ENCODE measurements at regions of chr2 and their contacts with region 1.

Region 1: DNA sequence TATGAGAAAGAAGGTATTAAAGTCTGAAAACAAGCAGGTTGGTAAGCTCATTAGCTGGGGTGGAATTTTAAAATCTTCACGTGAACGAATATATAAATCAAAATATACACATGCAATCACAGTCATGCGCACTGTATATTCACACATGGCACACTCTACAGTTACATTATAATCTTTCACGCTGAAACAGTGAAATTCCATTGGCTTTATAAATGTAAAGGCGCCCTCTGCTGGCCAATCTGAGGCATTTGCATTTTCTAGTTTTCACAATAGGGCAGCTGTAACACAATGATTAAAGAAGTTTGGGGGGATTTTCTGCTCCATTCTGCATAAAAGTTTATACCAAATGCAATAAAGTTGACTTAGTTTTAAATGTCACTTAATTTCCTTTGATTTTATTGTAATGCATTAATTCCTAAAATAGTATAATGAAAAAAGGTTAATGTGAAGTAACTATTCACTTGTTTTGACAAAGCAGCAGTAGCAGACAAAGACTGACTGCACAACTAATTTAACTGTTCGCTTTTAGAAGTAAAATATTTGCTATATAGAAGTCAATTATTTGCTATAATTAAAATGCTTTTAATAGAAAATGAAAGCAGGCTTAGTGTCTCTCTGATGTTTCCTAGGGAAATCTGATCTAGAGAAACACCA is 17.2 kb downstream of the IFIH1 start:
- DNase-seq: peak; percentile 63
- H3K4me3 ChIP-seq: no peak overlapping the region
- H3K27ac ChIP-seq: no peak overlapping the region
- H3K4me1 ChIP-seq: no peaks in the 10 kb centered on the region
- H3K27me3 ChIP-seq: no peaks in the 10 kb centered on the region
- CTCF ChIP-seq: peak; percentile 62 to 64
- POLR2A ChIP-seq: no peak

Region 2: DNA sequence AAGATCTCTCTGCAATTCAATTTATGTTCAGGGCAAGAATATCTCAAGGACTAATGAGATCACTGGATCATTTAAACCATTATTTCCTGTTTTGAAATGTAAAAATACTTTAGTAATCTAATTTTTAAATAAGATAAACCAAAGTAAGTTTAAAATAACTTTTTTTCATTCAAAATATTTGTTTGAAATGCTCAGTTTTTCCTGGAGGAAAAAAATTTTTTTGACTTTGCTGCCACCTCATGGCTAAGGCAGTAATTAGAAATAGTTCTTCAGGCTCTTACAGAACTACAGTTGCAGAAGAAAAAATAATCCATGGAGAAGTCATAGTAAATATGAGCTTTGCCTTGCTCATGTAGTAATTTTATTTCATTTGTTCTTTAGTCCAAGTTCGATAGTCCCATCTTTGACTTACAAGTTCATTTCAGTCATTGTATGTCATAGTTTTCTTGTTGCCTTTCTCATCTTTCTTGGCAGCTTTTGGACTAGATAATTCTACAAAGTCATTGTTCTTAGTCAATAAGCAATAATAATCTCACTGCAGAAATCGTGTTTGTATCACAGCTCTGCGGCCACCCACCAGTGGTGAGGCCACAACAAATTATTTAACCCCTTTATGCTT is 354.7 kb before region 1 on chr2:
- CTCF ChIA-PET with region 1: interaction called, 6 read pairs
- POLR2A ChIA-PET with region 1: no interaction called
- dilution Hi-C with region 1: no loop called
- intact Hi-C with region 1: loop called (anchors 5 kb)
- DNase-seq: peak; percentile 67
- H3K4me3 ChIP-seq: no peak overlapping the region
- H3K27ac ChIP-seq: no peak overlapping the region
- H3K4me1 ChIP-seq: no peaks in the 10 kb centered on the region
- H3K27me3 ChIP-seq: peaks cover 0 to 3% of the 10 kb centered on the region in 2 experiments
- CTCF ChIP-seq: peak; percentile 32 to 39
- POLR2A ChIP-seq: no peak

Region 3: GRCh38 chr2:162123806-162124758 is 177.2 kb before region 1 on chr2:
- CTCF ChIA-PET with region 1: interaction called, 27 read pairs
- POLR2A ChIA-PET with region 1: no interaction called
- dilution Hi-C with region 1: no loop called
- intact Hi-C with region 1: no loop called
- DNase-seq: peak; percentile 70
- H3K4me3 ChIP-seq: no peak overlapping the region
- H3K27ac ChIP-seq: no peak overlapping the region
- H3K4me1 ChIP-seq: peaks cover 13% of the 10 kb centered on the region
- H3K27me3 ChIP-seq: peaks cover 0 to 9% of the 10 kb centered on the region in 2 experiments
- CTCF ChIP-seq: peak; percentile 29 to 41
- POLR2A ChIP-seq: no peak

Region 4: DNA sequence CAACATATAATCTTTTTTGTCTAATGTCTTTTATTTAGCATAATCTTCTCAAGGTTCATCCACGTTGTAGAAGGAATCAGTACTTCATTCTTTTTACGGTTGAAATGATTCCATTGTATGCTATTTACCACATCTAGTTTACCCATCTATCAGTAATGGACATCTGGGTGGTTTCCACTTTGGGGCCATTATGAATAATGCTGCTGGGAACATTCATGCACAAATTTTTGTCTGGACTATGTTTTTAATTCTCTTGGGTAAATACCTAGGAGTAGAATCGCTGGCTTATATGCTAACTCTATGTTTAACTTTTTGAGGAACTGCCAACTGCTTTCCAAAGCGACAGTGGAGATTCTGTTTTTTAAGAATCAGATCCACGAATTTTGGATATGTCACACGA is 141.8 kb before region 1 on chr2:
- CTCF ChIA-PET with region 1: interaction called, 40 read pairs
- POLR2A ChIA-PET with region 1: no interaction called
- dilution Hi-C with region 1: no loop called
- intact Hi-C with region 1: no loop called
- DNase-seq: no peak
- H3K4me3 ChIP-seq: no peak overlapping the region
- H3K27ac ChIP-seq: no peak overlapping the region
- H3K4me1 ChIP-seq: peaks cover 3% of the 10 kb centered on the region
- H3K27me3 ChIP-seq: peaks cover 0 to 1% of the 10 kb centered on the region in 2 experiments
- CTCF ChIP-seq: no peak
- POLR2A ChIP-seq: no peak

Region 5: GRCh38 chr2:162244541-162245031 is 56.7 kb before region 1 on chr2:
- CTCF ChIA-PET with region 1: interaction called, 26 read pairs
- POLR2A ChIA-PET with region 1: no interaction called
- dilution Hi-C with region 1: no loop called
- intact Hi-C with region 1: no loop called
- DNase-seq: peak; percentile 91
- H3K4me3 ChIP-seq: no peak overlapping the region
- H3K27ac ChIP-seq: peak overlapping the region; percentile 81
- H3K4me1 ChIP-seq: peaks cover 19% of the 10 kb centered on the region
- H3K27me3 ChIP-seq: no peaks in the 10 kb centered on the region
- CTCF ChIP-seq: no peak
- POLR2A ChIP-seq: no peak

Region 6: DNA sequence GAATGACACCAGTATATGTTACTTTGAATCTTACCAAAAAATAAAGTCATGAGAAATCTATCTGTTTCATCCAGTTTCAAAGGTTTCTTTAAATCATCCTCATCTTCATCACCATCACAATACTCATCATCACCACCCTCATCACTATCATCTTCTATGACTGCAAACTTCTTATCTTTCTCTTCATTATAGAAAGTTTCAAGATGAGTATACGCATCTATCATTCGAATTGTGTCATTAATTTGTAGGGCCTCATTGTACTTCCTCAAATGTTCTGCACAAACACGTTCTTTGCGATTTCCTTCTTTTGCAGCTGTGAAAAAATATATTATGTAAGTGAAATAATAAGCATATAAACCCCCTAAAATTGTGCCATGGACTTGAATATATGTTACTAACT is 23.9 kb before region 1 on chr2:
- CTCF ChIA-PET with region 1: interaction called, 17 read pairs
- POLR2A ChIA-PET with region 1: no interaction called
- dilution Hi-C with region 1: no loop called
- intact Hi-C with region 1: no loop called
- DNase-seq: no peak
- H3K4me3 ChIP-seq: no peak overlapping the region
- H3K27ac ChIP-seq: no peak overlapping the region
- H3K4me1 ChIP-seq: no peaks in the 10 kb centered on the region
- H3K27me3 ChIP-seq: no peaks in the 10 kb centered on the region
- CTCF ChIP-seq: no peak
- POLR2A ChIP-seq: no peak

Region 7: DNA sequence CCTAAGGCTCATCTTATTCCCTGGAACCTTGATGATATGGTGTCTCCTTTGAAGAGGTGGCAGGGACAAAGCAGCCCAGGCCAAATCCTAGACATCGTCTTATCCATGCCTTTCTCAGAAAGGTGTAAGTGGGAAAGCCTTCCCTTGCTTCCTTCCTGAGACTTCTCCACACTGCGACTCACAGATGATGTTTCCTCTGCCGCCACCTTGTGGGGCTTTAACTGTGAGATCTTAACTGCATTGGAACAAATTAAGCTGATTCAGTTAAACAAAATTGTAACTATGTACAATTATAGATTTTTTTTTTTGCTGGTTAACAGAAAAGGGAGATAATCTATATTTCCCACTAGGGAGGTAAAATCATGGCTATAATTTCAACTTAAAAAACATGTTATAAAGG is 32.7 kb after region 1 on chr2:
- CTCF ChIA-PET with region 1: interaction called, 13 read pairs
- POLR2A ChIA-PET with region 1: no interaction called
- dilution Hi-C with region 1: no loop called
- intact Hi-C with region 1: no loop called
- DNase-seq: peak; percentile 35
- H3K4me3 ChIP-seq: no peak overlapping the region
- H3K27ac ChIP-seq: no peak overlapping the region
- H3K4me1 ChIP-seq: no peaks in the 10 kb centered on the region
- H3K27me3 ChIP-seq: peaks cover 0 to 2% of the 10 kb centered on the region in 2 experiments
- CTCF ChIP-seq: peak; percentile 19 to 26
- POLR2A ChIP-seq: no peak

Region 8: GRCh38 chr2:162677476-162677875 is 376.2 kb after region 1 on chr2:
- CTCF ChIA-PET with region 1: no interaction called
- POLR2A ChIA-PET with region 1: no interaction called
- dilution Hi-C with region 1: no loop called
- intact Hi-C with region 1: no loop called
- DNase-seq: peak; percentile 67
- H3K4me3 ChIP-seq: no peak overlapping the region
- H3K27ac ChIP-seq: no peak overlapping the region
- H3K4me1 ChIP-seq: peaks cover 5% of the 10 kb centered on the region
- H3K27me3 ChIP-seq: no peaks in the 10 kb centered on the region
- CTCF ChIP-seq: no peak
- POLR2A ChIP-seq: no peak

Measured in endothelial cell of umbilical vein (primary cell).